Astrocyte of the cerebellum (primary cell): ENCODE measurements at regions of chr7 and their contacts with region 1.

Region 1: GRCh38 chr7:90346336-90347125 is at the start of gene GTPBP10:
- DNase-seq: peak; percentile 89
- H3K4me3 ChIP-seq: peak within 1 kb of the TSS; percentile 87
- CTCF ChIP-seq: peak; percentile 85

Region 2: GRCh38 chr7:90383422-90383821 is 36.9 kb after region 1 on chr7:
- in situ Hi-C with region 1: loop called (anchors 5 kb)
- DNase-seq: no peak
- H3K4me3 ChIP-seq: no peak overlapping the region
- CTCF ChIP-seq: no peak

Region 3: DNA sequence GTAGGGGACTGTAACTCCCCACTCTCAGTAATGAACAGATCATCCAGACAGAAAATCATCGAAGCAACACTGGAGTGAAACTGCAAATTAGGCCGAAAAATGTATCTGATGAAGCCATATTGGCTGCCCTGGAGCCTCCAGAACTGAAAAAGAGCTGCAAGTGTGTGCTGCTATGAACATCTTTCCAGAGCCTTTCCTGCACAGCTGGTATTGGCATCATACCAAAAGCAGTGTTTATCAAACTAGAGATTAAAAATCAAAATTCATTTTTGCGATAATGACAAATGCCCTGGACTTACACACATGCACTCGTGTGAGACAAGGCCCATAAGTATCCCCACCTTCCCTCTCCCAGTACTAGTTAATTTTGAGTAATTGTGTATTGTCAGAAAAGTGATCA is 49.9 kb after region 1 on chr7:
- in situ Hi-C with region 1: no loop called
- DNase-seq: no peak
- H3K4me3 ChIP-seq: no peak overlapping the region
- CTCF ChIP-seq: no peak

Region 4: DNA sequence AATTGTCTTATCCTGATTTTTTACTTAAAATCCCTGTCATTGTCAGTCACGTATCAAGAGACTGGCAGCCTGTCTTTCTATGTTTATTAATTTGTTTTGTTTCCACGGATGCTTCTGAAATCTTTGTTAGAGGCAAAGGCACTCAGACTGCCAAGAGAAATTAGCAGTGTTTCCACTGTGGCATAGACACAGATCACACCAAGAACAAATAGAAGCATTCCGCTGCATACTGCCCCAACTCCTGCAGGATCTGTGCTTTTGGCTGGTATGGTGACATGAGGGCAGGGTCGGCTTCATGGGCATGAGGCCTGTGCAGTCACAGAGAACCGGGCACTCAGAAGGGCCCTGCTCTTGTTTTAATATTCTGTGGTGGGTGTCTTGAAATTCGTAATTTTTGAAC is 75.1 kb after region 1 on chr7:
- in situ Hi-C with region 1: no loop called
- DNase-seq: no peak
- H3K4me3 ChIP-seq: no peak overlapping the region
- CTCF ChIP-seq: no peak

Region 5: DNA sequence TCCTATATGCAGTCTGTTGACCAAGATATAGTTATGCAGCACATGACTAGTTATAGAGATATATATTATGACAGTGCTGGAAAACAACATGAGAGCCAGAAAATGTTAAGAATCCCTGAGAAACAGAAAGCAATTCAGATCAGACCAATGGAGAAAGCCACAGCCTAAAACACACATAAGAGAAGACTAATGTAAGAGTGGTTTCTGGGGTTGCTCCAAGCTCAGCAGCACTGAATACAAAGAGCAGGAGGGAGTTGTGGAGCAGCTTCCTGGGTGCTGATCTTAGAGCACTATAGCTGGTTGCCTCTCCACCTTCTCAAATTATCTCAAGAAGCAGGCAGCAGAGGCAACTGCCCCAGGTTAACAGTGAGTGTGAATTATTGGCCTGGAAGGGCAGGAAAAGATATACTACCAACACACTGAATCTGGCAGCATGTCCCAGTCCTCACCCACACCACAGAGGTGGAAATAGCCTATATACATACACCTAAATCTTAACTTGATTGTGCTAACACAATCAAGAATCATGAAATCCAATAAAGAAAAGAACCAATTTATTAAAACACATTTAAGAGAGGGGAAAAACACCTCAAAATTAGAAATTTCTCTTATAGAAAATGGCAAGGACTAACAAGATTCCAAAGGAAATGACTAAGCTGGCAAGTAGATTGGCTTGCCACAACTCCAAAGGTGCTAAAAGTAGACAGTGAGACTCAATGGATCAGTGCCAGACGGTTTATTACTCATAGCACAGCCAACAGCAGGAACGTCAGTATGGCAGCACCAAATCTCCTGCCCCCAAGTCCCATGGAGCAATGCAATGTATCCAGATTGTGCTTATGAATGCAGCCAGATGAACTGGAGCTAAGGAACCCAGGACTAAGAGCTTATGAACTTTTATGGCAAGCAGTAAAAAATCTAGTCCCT is 128.0 kb after region 1 on chr7:
- in situ Hi-C with region 1: no loop called
- DNase-seq: peak; percentile 78
- H3K4me3 ChIP-seq: no peak overlapping the region
- CTCF ChIP-seq: no peak